ENCODE measurements at regions of chr4 and their contacts with region 1.

Region 1: DNA sequence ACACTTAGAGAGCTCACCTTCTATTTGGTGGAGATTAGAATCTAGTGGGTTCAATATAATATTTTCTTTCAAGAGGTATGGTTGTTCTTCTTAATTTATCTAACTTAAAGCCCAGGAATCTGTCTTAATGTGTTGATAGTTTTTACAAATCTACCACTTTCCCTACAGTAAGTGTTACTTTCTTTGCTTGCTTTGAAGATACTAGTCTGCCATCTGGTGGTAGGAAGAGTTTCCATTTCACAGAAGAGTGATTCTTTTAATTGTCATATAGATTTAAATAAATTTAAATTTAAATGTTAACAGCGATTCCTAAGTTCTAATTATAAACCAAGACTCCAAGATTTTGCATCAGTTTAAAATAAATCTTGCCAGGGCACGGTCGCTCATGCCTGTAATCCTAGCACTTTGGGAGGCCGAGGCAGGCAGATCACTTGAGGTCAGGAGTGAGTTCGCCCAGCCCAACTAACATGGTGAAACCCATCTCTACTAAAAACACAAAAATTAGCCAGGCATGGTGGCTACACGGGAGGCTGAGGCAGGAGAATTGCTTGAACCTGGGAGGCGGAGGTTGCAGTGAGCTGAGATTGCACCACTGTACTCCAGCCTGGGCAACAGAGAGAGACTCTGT is 43.5 kb downstream of the NUDT9 start:
- DNase-seq: peak in 7 of 9 donors; percentile 27 to 55 (median 40)
- ATAC-seq: peak; percentile 55
- H3K4me3 ChIP-seq: no peak overlapping the region
- H3K4me3 Mint-ChIP-seq: no peak overlapping the region
- H3K27ac ChIP-seq: no peak overlapping the region
- H3K27ac Mint-ChIP-seq: no peak overlapping the region
- H3K4me1 ChIP-seq: no peaks in the 10 kb centered on the region
- H3K4me1 Mint-ChIP-seq: peaks cover 0 to 3% (median 0%) of the 10 kb centered on the region in 7 donors
- H3K27me3 ChIP-seq: no peaks in the 10 kb centered on the region
- H3K27me3 Mint-ChIP-seq: no peaks in the 10 kb centered on the region

Region 2: GRCh38 chr4:86924811-86925210 is 541.0 kb before region 1 on chr4:
- CTCF ChIA-PET with region 1: no interaction called
- POLR2A ChIA-PET with region 1: no interaction called
- intact Hi-C with region 1: loop called in 1 of 2 experiments (anchors 5 kb)
- DNase-seq: no peak
- ATAC-seq: no peak
- H3K4me3 ChIP-seq: no peak overlapping the region
- H3K4me3 Mint-ChIP-seq: no peak overlapping the region
- H3K27ac ChIP-seq: no peak overlapping the region
- H3K27ac Mint-ChIP-seq: peak overlapping the region in 3 of 9 donors; percentile 8 to 50 (median 32)
- H3K4me1 ChIP-seq: no peaks in the 10 kb centered on the region
- H3K4me1 Mint-ChIP-seq: peaks cover 0 to 25% (median 5%) of the 10 kb centered on the region in 7 donors
- H3K27me3 ChIP-seq: no peaks in the 10 kb centered on the region
- H3K27me3 Mint-ChIP-seq: no peaks in the 10 kb centered on the region

Region 3: GRCh38 chr4:87235020-87235671 is 230.7 kb before region 1 on chr4:
- CTCF ChIA-PET with region 1: no interaction called
- POLR2A ChIA-PET with region 1: no interaction called
- intact Hi-C with region 1: loop called (anchors 1 to 10 kb)
- DNase-seq: no peak
- ATAC-seq: no peak
- H3K4me3 ChIP-seq: peak overlapping the region; percentile 36
- H3K4me3 Mint-ChIP-seq: peak overlapping the region; percentile 62 to 87 (median 83)
- H3K27ac ChIP-seq: no peak overlapping the region
- H3K27ac Mint-ChIP-seq: peak overlapping the region in 2 of 9 donors; percentile 61 to 66
- H3K4me1 ChIP-seq: peaks cover 0 to 4% of the 10 kb centered on the region in 2 donors
- H3K4me1 Mint-ChIP-seq: peaks cover 0 to 6% (median 0%) of the 10 kb centered on the region in 7 donors
- H3K27me3 ChIP-seq: no peaks in the 10 kb centered on the region
- H3K27me3 Mint-ChIP-seq: peaks cover 0 to 18% (median 5%) of the 10 kb centered on the region in 5 donors

Region 4: GRCh38 chr4:87353592-87353991 is 112.3 kb before region 1 on chr4:
- CTCF ChIA-PET with region 1: interaction called, 4 read pairs
- POLR2A ChIA-PET with region 1: no interaction called
- intact Hi-C with region 1: loop called (anchors 5 kb)
- DNase-seq: peak in 6 of 9 donors; percentile 5 to 41 (median 21)
- ATAC-seq: peak; percentile 64
- H3K4me3 ChIP-seq: no peak overlapping the region
- H3K4me3 Mint-ChIP-seq: no peak overlapping the region
- H3K27ac ChIP-seq: no peak overlapping the region
- H3K27ac Mint-ChIP-seq: no peak overlapping the region
- H3K4me1 ChIP-seq: no peaks in the 10 kb centered on the region
- H3K4me1 Mint-ChIP-seq: peaks cover 0 to 6% (median 0%) of the 10 kb centered on the region in 7 donors
- H3K27me3 ChIP-seq: no peaks in the 10 kb centered on the region
- H3K27me3 Mint-ChIP-seq: no peaks in the 10 kb centered on the region

Region 5: GRCh38 chr4:87390891-87391575 is 74.8 kb before region 1 on chr4 and contains the start of gene HSD17B11:
- CTCF ChIA-PET with region 1: interaction called, 7 read pairs
- POLR2A ChIA-PET with region 1: no interaction called
- intact Hi-C with region 1: loop called (anchors 5 kb)
- DNase-seq: peak; percentile 44 to 83 (median 79)
- ATAC-seq: peak; percentile 99
- H3K4me3 ChIP-seq: peak within 1 kb of the TSS; percentile 85
- H3K4me3 Mint-ChIP-seq: peak within 1 kb of the TSS; percentile 87 to 99 (median 97)
- H3K27ac ChIP-seq: peak within 1 kb of the TSS; percentile 82
- H3K27ac Mint-ChIP-seq: peak within 1 kb of the TSS; percentile 83 to 96 (median 94)
- H3K4me1 ChIP-seq: peaks cover 10 to 17% of the 10 kb centered on the region in 2 donors
- H3K4me1 Mint-ChIP-seq: peaks cover 32 to 66% (median 57%) of the 10 kb centered on the region in 7 donors
- H3K27me3 ChIP-seq: no peaks in the 10 kb centered on the region
- H3K27me3 Mint-ChIP-seq: peaks cover 0 to 14% (median 0%) of the 10 kb centered on the region in 5 donors
- total RNA-seq, gene HSD17B11: 34.3 to 74.4 (median 61.0) TPM

Region 6: DNA sequence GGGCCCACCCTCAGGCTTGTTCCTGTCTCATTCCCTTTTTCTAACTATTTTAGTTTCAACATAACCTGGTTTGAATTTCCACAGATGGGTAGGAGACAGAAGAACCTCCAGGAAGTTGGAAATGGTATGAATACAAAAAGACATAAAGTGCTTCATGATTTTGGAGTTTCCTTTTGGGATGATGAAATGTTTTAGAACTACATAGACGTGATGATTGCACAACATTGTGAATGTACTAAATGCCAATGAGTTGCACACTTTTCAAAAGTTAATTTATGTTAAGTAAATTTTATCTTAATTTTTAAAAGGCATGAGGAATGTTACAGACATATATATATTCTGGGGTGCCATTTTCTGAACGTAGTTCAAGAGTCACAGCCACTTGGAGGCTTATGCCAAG is 292.4 kb after region 1 on chr4:
- CTCF ChIA-PET with region 1: no interaction called
- POLR2A ChIA-PET with region 1: no interaction called
- intact Hi-C with region 1: no loop called
- DNase-seq: no peak
- ATAC-seq: no peak
- H3K4me3 ChIP-seq: no peak overlapping the region
- H3K4me3 Mint-ChIP-seq: no peak overlapping the region
- H3K27ac ChIP-seq: no peak overlapping the region
- H3K27ac Mint-ChIP-seq: no peak overlapping the region
- H3K4me1 ChIP-seq: no peaks in the 10 kb centered on the region
- H3K4me1 Mint-ChIP-seq: peaks cover 0 to 1% (median 0%) of the 10 kb centered on the region in 7 donors
- H3K27me3 ChIP-seq: no peaks in the 10 kb centered on the region
- H3K27me3 Mint-ChIP-seq: peaks cover 0 to 17% (median 7%) of the 10 kb centered on the region in 5 donors

Measured in naive thymus-derived CD4-positive, alpha-beta T cell (primary cell).